OCI-LY7 (cell line): ENCODE measurements at regions of chr1 and their contacts with region 1.

Region 1: DNA sequence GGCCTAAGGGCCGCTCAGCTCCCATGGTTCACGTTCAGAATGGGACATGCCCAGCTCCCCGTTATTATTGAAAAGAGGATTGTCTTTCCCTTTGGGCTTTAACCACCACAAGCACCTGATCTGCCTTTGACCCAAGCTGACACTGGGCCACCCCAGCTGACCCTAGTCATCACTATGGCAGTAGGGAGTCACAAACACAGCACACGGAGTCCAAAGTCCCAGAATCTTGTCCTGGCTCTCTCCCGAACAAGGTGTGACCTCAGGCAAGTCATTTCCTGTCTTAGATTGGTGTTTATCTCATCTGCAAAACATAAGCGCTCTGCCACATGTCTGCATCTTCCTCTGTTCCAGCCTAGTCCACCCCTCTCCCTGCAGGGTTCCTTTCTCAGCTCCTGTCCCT is 31.5 kb downstream of the IGFN1 start:
- DNase-seq: no peak
- H3K4me3 ChIP-seq: no peak overlapping the region
- H3K27ac ChIP-seq: no peak overlapping the region
- H3K4me1 ChIP-seq: peaks cover 5% of the 10 kb centered on the region
- CTCF ChIP-seq: no peak

Region 2: DNA sequence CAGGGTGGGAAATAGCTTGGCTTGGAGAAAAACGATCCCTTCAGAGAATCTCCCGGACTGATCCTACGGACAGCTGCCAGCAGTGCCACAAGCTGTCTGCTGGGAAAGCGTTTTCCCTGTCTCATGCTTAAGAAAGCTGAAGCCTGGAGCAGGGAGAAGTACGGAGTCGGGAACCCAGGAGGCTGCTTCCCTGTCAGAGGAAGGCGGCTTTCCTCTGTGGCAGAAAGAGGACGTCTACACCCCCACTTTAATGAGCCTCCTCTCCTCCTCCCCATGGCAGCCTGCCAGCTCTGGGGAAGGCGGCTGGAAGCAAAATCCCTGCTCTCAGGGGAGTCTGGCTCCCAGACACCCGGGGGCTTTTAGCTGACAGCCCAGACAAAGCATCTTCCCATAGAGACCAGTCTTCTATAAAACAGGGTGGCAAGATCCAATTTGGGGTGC is 205.9 kb before region 1 on chr1:
- CTCF ChIA-PET with region 1: no interaction called
- POLR2A ChIA-PET with region 1: no interaction called
- intact Hi-C with region 1: no loop called
- DNase-seq: no peak
- H3K4me3 ChIP-seq: no peak overlapping the region
- H3K27ac ChIP-seq: no peak overlapping the region
- H3K4me1 ChIP-seq: peaks cover 65% of the 10 kb centered on the region
- CTCF ChIP-seq: no peak

Region 3: GRCh38 chr1:201149400-201149799 is 72.7 kb before region 1 on chr1:
- CTCF ChIA-PET with region 1: no interaction called
- POLR2A ChIA-PET with region 1: interaction called, 3 read pairs
- intact Hi-C with region 1: loop called (anchors 2 kb)
- DNase-seq: peak; percentile 63
- H3K4me3 ChIP-seq: no peak overlapping the region
- H3K27ac ChIP-seq: no peak overlapping the region
- H3K4me1 ChIP-seq: peaks cover 9% of the 10 kb centered on the region
- CTCF ChIP-seq: peak; percentile 81